ENCODE measurements at regions of chr10 and their contacts with region 1.

Region 1: DNA sequence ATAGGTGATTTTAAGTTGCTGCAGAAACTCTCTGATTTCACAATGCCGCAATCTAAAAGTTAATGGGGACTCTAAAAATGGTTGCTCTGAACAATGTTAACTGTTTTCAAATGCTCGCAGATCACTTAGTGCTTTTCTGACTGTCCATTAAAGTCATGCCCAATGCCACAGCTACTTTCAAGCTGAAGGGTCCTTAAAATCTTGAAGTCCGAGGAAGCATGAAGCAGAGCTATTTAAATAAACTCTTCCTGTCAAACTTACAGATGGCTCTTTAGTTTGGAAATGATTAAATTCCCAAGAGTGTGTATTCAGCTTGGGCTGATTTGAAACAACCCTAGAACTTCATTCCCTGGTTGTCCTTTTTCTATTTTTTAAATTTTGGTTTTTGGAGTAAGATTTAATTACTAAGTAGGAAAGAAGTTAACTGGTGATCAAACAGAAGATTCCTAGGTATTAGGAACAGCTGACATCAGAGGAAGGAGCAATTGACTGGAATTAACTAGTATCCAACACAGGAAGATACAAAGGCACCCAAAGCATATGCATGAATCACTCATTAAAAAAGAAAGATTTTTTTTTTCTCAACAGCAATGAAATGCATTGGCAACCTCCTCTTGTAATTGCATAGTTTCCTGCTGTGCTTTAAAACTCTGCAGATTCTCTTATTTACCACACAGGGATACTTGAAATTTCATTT is 105.1 kb downstream of the NRP1 start:
- DNase-seq: no peak
- H3K4me3 ChIP-seq: no peak overlapping the region
- H3K27ac ChIP-seq: no peak overlapping the region
- H3K4me1 ChIP-seq: no peaks in the 10 kb centered on the region
- CTCF ChIP-seq: no peak

Region 2: GRCh38 chr10:33174674-33175434 is 54.5 kb before region 1 on chr10:
- CTCF ChIA-PET with region 1: no interaction called
- POLR2A ChIA-PET with region 1: no interaction called
- intact Hi-C with region 1: loop called (anchors 5 kb)
- DNase-seq: no peak
- H3K4me3 ChIP-seq: no peak overlapping the region
- H3K27ac ChIP-seq: no peak overlapping the region
- H3K4me1 ChIP-seq: no peaks in the 10 kb centered on the region
- CTCF ChIP-seq: no peak

Region 3: DNA sequence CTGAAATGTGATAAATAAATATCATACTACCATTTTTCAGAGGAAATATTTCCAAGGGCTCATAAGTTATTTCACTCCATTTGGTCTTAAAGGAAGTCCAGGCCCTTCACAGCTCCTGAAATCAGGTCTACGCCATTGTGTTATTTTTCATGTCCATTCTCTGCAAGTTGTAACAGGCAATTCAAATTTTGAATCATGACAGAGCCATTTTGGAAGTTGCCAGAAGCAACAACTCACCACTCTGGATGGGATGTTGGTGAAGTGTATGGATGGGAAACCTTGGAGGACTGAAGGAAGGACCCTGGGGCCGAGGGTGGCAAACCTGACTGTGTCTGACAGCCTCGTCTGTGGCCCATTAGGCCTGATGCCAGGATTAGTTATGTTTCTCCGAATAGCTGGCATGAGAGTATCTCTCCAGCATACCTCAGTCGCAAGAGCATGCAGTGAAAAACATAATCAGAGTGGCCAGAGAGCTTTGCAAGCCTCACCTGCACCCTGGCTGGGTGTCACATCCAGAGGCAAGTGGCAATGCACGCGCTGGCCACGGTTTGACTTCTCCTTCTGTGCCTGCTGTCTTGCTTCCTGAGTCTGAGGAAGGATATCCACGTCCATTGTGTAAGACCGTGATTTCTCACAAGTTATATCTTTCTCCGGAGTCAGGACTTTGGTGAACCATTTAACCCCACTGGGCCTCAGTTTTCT is 18.0 kb after region 1 on chr10:
- CTCF ChIA-PET with region 1: no interaction called
- POLR2A ChIA-PET with region 1: no interaction called
- intact Hi-C with region 1: no loop called
- DNase-seq: no peak
- H3K4me3 ChIP-seq: no peak overlapping the region
- H3K27ac ChIP-seq: no peak overlapping the region
- H3K4me1 ChIP-seq: no peaks in the 10 kb centered on the region
- CTCF ChIP-seq: no peak

Region 4: DNA sequence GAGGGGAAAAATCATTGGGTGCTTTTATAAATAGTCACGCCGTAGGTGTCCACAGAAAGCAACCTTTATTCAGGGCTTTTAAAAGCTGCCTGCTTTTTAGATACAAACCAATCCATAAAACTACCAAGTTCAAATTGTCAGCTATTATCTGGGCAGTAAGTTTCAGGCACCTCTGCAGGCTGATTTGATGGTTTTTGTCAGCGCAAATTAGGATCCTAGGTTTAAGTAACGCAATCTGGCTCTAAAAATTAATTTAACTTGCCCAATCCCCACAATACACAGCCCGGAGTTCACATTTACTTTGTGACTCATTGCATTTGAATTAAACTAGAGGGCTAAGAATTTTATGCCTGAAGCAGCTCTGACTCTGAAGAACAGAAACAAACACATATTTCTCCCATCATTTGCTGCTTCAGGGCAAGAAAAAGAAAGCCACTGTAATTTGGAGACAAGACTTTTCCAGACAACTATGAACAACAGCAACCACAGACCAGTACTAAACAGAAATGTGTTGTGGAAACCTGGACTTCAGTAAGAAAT is 61.7 kb after region 1 on chr10:
- CTCF ChIA-PET with region 1: no interaction called
- POLR2A ChIA-PET with region 1: no interaction called
- intact Hi-C with region 1: no loop called
- DNase-seq: no peak
- H3K4me3 ChIP-seq: no peak overlapping the region
- H3K27ac ChIP-seq: no peak overlapping the region
- H3K4me1 ChIP-seq: no peaks in the 10 kb centered on the region
- CTCF ChIP-seq: no peak

Measured in OCI-LY7 (cell line).